Heart right ventricle (tissue), 16 donors: ENCODE measurements at regions of chr5 and their contacts with region 1.

Region 1: GRCh38 chr5:74179179-74179578 is 461.3 kb downstream of the ENC1 start:
- DNase-seq: no peak
- ATAC-seq: peak in 3 of 8 donors; percentile 38 to 80 (median 72)
- H3K4me3 ChIP-seq: no peak overlapping the region
- H3K27ac ChIP-seq: no peak overlapping the region
- H3K4me1 ChIP-seq: peaks cover 0 to under 1% (median 0%) of the 10 kb centered on the region in 9 donors
- H3K27me3 ChIP-seq: no peaks in the 10 kb centered on the region
- CTCF ChIP-seq: no peak

Region 2: DNA sequence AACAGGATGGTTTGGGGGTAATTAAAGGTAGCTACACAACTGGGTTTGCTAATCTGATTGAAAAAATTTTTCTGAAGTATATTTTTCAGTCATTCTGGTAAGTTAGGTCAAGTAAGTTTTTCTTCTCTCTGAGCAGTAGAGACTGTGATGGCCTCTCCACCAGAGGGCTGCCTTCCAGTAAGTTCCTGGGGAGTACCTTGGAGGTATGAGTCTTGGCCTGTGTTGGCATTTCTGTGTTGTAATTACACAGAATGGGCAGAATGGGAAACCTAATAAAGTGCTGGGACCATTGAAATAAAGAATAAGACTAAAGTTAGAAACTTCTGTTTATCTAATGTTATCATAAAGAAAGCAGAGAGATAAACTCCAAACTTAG is 122.4 kb before region 1 on chr5:
- intact Hi-C with region 1: loop called in 1 of 10 experiments (anchors 10 kb)
- DNase-seq: no peak
- ATAC-seq: peak in 3 of 8 donors; percentile 33 to 63 (median 43)
- H3K4me3 ChIP-seq: no peak overlapping the region
- H3K27ac ChIP-seq: peak overlapping the region in 3 of 10 donors; percentile 37 to 50 (median 39)
- H3K4me1 ChIP-seq: peaks cover 0 to 28% (median 8%) of the 10 kb centered on the region in 9 donors
- H3K27me3 ChIP-seq: peaks cover 0 to 4% (median 0%) of the 10 kb centered on the region in 7 donors
- CTCF ChIP-seq: peak; percentile 14 to 63 (median 38)

Region 3: DNA sequence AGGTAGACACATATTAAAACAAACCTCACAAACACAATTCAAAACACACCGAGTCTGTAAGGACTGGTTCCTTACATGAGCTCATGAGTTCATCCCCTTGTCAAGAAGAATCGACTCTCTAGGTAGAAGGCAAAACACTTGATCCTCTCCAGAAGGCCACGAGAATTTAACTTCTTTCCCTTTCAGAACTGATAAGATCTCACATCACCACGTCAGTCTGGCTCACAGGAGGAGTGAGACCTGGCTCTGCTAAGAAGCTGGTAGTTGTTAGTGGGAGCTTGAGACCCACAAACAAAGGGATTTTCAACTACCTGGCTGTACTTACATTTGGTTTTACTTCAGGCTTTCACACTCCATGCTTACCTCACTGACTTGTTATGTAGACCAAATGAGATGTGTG is 94.0 kb before region 1 on chr5:
- intact Hi-C with region 1: no loop called
- DNase-seq: no peak
- ATAC-seq: no peak
- H3K4me3 ChIP-seq: no peak overlapping the region
- H3K27ac ChIP-seq: no peak overlapping the region
- H3K4me1 ChIP-seq: no peaks in the 10 kb centered on the region
- H3K27me3 ChIP-seq: peaks cover 0 to 3% (median 0%) of the 10 kb centered on the region in 7 donors
- CTCF ChIP-seq: no peak

Region 4: DNA sequence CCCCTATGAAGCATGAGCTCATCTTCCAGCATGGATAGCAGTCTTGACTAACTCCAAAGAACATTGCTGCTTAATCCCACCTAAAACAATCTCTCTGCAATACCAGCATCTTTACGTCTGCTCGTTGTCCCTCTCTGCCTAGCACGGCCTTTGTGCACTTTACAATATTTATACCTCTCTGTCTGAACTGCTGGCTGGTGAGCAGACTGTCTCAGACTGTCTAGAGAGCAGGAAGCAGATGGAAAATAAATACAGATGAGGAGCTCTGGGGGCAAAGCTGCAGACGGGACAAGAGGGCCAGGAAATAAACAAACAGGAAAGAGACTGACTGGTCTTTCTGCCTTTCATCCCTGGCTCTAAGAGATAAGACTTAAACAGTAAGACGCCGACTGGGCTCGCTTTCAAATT is 236.5 kb after region 1 on chr5:
- intact Hi-C with region 1: no loop called
- DNase-seq: no peak
- ATAC-seq: peak in 4 of 8 donors; percentile 44 to 50 (median 48)
- H3K4me3 ChIP-seq: no peak overlapping the region
- H3K27ac ChIP-seq: peak overlapping the region in 1 of 10 donors; percentile 19
- H3K4me1 ChIP-seq: peaks cover 0 to 10% (median 0%) of the 10 kb centered on the region in 9 donors
- H3K27me3 ChIP-seq: no peaks in the 10 kb centered on the region
- CTCF ChIP-seq: no peak